ENCODE measurements at regions of chrX and their contacts with region 1.

Region 1: GRCh38 chrX:5646818-5647217 is 581.8 kb downstream of the NLGN4X start:
- DNase-seq: no peak
- H3K4me3 ChIP-seq: no peak overlapping the region
- CTCF ChIP-seq: no peak

Region 2: DNA sequence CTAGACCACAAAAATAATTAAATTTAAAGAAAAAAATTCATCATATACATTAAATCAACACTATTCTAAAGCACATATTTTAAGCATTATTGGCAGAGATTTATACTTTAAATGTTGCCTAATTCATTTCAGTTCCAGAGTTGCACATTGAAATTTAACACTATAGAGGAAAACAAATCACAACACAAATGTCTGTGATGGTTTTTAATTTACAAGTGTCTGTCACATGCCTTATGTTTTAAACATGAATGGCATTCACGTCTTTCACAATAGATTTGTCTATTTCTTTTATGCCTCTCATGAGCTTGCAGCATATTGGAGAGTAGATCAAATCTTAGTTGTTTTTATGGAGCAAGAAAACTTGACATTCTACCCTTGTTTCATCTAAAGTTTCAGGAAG is 229.4 kb before region 1 on chrX:
- in situ Hi-C with region 1: no loop called
- DNase-seq: no peak
- H3K4me3 ChIP-seq: no peak overlapping the region
- CTCF ChIP-seq: no peak

Region 3: GRCh38 chrX:5549512-5549911 is 97.3 kb before region 1 on chrX:
- in situ Hi-C with region 1: loop called (anchors 5 kb)
- DNase-seq: no peak
- H3K4me3 ChIP-seq: no peak overlapping the region
- CTCF ChIP-seq: no peak

Region 4: GRCh38 chrX:5595570-5595969 is 51.2 kb before region 1 on chrX:
- in situ Hi-C with region 1: no loop called
- DNase-seq: no peak
- H3K4me3 ChIP-seq: no peak overlapping the region
- CTCF ChIP-seq: no peak

Region 5: DNA sequence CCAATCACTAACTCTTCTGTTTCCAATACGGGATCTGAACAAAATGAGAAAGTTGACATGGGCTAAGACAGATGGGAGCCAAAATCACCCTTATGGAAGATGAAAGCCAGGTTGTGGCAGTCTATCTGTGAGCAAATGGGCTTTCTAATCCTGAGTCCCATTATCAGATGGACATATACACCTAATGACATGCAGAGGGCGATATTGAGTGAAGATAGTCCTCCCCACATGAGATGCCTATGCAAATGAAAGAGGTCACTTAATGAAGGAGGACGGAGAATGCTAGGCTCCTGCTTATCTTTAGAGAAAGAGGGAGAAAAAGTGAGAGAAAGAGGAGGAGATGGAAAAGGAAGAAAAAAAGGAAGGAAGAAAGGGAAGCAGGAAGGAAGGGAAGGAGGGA is 34.3 kb after region 1 on chrX:
- in situ Hi-C with region 1: no loop called
- DNase-seq: peak; percentile 8
- H3K4me3 ChIP-seq: no peak overlapping the region
- CTCF ChIP-seq: peak; percentile 24

Region 6: DNA sequence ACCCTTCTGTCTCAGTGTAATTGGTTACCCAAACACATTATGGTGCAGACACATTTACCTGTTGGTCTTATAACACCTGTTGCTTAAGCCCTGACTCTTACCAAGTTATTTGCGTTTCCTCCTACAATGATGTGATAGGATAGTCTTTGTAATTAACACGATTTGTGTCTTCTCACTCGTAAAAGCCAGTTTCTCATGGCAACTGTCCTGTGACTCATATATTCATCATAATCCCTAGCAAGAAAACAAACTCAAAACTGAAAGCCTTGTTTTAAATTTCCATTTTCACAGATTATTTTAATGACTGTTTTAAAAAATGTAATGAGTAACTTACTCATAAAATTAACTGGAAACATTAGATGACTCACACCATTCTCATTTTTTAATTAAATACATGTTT is 86.7 kb after region 1 on chrX:
- in situ Hi-C with region 1: no loop called
- DNase-seq: no peak
- H3K4me3 ChIP-seq: no peak overlapping the region
- CTCF ChIP-seq: no peak